BJ (cell line): ENCODE measurements at regions of chr2 and their contacts with region 1.

Region 1: GRCh38 chr2:180980106-180980942 is at the start of gene UBE2E3:
- DNase-seq: no peak
- H3K4me3 ChIP-seq: peak within 1 kb of the TSS; percentile 76
- H3K27me3 ChIP-seq: no peaks in the 10 kb centered on the region
- CTCF ChIP-seq: peak; percentile 77
- polyA plus RNA-seq, gene UBE2E3: 58.8 and 105 TPM in 2 replicates

Region 2: DNA sequence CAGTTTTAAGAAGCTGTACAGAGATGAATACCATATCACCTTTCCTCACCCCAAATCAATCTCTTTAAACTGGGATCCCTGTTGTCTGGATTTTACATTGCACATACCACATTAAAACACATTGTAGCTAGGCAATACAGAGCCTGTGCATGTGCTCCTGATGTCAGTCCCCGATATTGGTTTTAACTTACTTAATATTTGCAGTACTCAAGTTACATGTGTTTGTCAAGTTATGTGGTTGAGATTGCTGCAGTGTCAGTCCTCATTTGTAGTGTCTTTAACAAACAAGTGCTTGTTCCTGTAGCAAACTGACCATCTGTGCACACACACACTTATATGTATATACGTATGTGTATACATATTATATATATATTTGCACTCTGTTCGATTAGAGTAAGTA is 10.3 kb before region 1 on chr2:
- CTCF ChIA-PET with region 1: interaction called, 14 read pairs
- POLR2A ChIA-PET with region 1: no interaction called
- DNase-seq: no peak
- H3K4me3 ChIP-seq: no peak overlapping the region
- H3K27me3 ChIP-seq: no peaks in the 10 kb centered on the region; the same call in 1 of the 2 replicates
- CTCF ChIP-seq: no peak

Region 3: DNA sequence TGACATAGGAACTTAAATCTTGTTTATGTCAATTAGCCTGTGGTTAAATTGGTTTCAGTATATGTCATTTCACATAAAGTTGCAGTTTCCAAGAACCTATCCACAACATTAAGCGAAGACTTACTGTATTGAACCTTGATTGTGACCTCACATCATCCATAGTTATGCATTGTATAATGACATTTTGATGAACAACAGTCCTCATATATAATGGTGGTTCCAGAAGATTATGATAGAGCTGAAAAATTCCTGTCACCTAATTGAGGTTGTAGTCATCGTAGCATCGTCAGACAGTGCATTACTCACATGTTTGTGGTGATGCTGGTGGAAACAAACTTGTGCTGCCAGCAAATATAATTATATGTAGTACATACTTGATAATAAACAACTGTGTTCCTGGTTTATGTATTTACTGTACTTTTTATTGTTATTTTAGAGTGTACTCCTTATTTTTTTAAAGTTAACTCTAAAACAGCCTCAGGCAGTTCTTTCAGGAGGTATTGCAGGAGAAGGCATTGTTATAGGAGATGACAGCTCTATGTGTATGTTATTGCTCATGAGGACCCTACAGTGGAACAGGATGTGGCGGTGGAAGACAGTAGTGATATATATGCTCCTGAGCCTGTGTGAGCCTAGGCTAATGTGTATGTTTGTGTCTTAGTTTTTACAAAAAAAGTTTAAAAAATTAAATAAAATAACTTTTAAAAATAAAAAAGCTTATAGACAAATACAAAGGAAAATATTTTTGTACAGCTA is 56.7 kb after region 1 on chr2:
- CTCF ChIA-PET with region 1: no interaction called
- POLR2A ChIA-PET with region 1: no interaction called
- DNase-seq: peak; percentile 41
- H3K4me3 ChIP-seq: no peak overlapping the region
- H3K27me3 ChIP-seq: no peaks in the 10 kb centered on the region
- CTCF ChIP-seq: no peak